Activated B cell treated with CpG ODN at 0.5 μM for 24 hours (primary cell): ENCODE measurements at regions of chr19 and their contacts with region 1.

Region 1: DNA sequence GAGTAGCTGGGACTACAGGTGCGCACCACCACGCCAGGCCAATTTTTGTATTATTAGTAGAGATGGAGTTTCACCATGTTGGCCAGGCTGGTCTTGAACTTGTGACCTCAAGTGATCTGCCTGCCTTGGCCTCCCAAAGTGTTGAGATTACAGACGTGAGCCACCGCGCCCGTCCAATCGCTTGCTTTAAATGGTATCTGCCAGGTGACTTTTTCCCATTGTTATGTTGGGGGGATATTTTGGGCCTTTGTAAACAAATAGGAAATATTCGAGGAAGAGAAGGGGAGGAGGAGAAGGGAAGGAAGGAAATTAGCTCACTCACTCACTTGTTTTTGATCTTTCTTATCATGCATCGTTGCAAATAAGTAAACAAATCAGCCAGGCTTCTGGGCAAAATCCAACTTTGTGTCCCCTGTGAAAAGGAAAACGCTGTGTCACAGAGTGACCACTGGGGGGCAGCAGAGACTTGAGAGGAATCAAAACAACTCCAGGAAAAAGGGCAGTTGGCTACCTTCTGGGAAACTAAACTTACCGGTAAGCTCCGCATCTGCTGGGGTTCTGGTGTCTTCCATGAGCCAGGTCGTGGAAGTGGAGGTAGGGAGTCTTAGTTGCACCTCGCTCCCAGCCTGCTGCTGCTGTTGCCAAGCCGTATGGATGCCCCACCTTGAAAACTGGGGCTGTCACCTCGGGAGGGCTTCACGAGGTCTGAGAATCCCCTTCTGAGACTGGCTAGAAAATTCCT is 9.3 kb upstream of the RANBP3 start:
- DNase-seq: peak; percentile 48
- ATAC-seq: peak; percentile 61
- H3K4me3 Mint-ChIP-seq: peak overlapping the region; percentile 78
- H3K27ac Mint-ChIP-seq: no peak overlapping the region
- H3K4me1 Mint-ChIP-seq: peaks cover 23% of the 10 kb centered on the region
- H3K27me3 Mint-ChIP-seq: no peaks in the 10 kb centered on the region
- CTCF ChIP-seq: no peak

Region 2: DNA sequence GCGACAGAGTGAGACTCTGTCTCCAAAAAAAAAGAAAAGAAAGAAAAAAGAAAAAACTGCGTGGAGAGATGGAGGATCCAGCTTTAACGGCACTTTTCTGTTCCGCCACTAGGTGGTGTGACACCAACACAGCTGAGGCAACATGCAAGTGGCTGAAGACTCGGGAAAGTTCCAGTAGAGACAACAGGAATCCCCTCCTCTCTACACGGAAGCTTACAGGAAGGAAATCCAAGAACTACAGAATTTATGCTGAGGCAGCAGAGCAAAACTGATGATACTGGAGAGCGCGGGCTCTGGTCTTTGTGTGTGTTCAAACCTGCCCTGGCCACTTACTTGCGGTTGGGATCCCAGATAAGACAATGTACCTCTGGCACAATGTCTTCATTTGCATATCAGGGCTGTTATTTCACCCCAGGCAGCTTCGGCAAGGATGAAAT is 19.2 kb before region 1 on chr19:
- CTCF ChIA-PET with region 1: interaction called, 24 read pairs
- POLR2A ChIA-PET with region 1: no interaction called
- intact Hi-C with region 1: loop called (anchors 1 kb)
- DNase-seq: no peak
- ATAC-seq: peak; percentile 72
- H3K4me3 Mint-ChIP-seq: peak overlapping the region; percentile 50
- H3K27ac Mint-ChIP-seq: peak overlapping the region; percentile 73
- H3K4me1 Mint-ChIP-seq: peaks cover 78% of the 10 kb centered on the region
- H3K27me3 Mint-ChIP-seq: no peaks in the 10 kb centered on the region
- CTCF ChIP-seq: peak; percentile 28

Region 3: DNA sequence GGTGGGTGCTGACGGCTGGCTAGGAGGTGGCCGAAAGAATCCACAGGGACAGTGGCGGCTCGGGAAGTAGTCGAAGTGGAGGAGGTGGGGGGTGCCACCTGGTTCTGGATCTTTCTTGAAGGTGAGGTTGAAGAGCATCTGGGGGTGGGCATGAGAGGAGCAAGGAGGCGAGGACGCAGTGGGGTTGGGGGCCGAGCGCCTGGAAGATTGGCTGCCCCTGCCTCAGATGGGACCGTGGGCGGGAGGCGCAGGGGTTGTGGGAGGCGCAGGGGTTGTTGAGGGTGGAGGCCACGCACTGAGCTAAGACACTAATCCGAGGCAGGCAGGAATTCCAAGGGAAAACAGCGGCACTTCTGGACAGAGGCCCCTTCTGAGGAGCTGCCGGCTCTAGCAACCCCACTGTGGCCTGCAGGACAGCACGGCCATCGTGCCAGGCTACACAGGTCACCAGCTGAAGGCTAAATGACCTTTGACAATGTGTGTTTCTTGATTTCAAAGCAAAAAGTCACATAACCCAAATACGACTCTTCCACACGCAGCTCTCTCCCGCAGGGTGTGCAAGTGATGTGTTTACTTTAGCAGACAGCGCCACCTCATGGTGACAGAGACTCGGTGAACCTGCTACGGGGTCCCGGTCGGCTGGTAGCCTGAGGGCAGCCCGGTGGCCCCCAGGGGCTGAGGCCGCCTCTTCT is 34.8 kb after region 1 on chr19:
- CTCF ChIA-PET with region 1: interaction called, 12 read pairs
- POLR2A ChIA-PET with region 1: interaction called, 3 read pairs
- intact Hi-C with region 1: loop called (anchors 1 kb)
- DNase-seq: peak; percentile 50
- ATAC-seq: peak; percentile 97
- H3K4me3 Mint-ChIP-seq: no peak overlapping the region
- H3K27ac Mint-ChIP-seq: no peak overlapping the region
- H3K4me1 Mint-ChIP-seq: no peaks in the 10 kb centered on the region
- H3K27me3 Mint-ChIP-seq: peaks cover 3% of the 10 kb centered on the region
- CTCF ChIP-seq: peak; percentile 25

Region 4: DNA sequence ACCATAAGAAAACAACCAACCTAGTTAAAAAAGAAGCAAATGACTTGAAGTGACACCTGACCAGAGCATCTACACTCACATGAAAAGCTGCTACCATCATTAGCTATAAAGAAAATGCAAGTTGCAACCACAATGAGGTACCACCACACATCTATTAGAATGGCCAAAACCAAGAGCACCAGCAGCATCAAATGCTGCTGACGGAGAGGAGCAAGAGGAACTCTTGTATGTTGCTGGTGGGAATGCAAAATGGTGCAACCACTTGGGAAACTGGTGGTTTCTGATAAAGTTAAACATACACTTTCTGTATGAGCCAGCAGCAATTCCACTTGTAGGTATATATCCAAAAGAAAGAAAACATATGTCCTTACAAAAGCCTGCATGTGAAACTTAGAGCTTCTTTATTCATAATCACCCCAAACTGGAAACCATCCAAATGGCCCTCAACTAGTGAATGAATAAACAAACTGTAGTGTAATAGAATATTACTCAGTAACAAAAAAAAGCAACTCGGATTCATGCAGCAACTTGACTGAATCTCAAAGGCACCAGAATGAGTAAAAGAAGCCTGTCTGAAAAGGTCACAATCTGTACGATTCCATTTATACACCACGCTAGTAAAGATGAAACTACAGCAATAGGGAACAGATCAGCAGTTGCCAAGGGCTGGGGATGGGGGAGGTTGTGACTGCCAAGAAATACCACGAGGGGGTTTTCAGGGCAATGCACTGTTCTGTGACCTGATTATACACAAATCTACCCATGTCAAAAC is 51.6 kb after region 1 on chr19:
- CTCF ChIA-PET with region 1: interaction called, 7 read pairs
- POLR2A ChIA-PET with region 1: interaction called, 4 read pairs
- intact Hi-C with region 1: loop called (anchors 5 kb)
- DNase-seq: no peak
- ATAC-seq: peak; percentile 86
- H3K4me3 Mint-ChIP-seq: peak overlapping the region; percentile 55
- H3K27ac Mint-ChIP-seq: peak overlapping the region; percentile 73
- H3K4me1 Mint-ChIP-seq: peaks cover 26% of the 10 kb centered on the region
- H3K27me3 Mint-ChIP-seq: no peaks in the 10 kb centered on the region
- CTCF ChIP-seq: no peak

Region 5: GRCh38 chr19:6103217-6103644 is 116.0 kb after region 1 on chr19:
- CTCF ChIA-PET with region 1: no interaction called
- POLR2A ChIA-PET with region 1: no interaction called
- intact Hi-C with region 1: no loop called
- DNase-seq: no peak
- ATAC-seq: no peak
- H3K4me3 Mint-ChIP-seq: no peak overlapping the region
- H3K27ac Mint-ChIP-seq: no peak overlapping the region
- H3K4me1 Mint-ChIP-seq: peaks cover 19% of the 10 kb centered on the region
- H3K27me3 Mint-ChIP-seq: peaks cover 2% of the 10 kb centered on the region
- CTCF ChIP-seq: no peak

Region 6: DNA sequence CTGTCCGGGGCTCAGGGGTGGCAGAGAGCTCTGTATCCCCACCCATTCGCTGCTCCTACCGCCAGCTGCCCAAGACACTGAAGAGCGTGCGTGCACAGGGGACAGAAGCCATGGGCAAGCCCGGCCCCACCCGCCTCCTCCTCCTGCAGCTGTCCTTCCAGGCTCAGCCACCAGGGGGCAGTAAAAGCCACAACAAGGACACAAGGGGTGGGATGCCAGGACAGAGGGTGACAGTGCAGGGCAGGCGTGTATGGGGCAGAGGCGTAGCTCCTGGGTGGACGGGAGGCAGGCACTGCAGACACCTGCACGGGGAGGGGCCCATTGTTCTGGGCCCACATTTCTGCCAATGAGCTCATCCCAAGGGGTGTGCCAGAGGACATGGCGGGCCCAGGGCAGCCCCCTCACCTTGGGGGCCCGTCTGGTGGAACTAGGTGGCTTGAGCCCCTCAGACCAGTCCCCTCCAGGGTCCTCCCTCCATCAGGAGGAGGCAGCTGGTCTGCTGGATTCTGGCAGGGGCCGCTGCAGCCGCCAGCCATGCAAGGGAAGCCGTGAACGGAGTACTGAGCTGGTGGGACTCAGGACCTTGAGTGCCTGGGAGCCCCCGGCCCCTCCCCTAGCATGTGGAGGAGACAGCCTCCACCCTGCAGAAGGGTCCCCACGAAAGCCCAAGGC is 231.4 kb after region 1 on chr19:
- CTCF ChIA-PET with region 1: no interaction called
- POLR2A ChIA-PET with region 1: no interaction called
- intact Hi-C with region 1: no loop called
- DNase-seq: peak; percentile 79
- ATAC-seq: peak; percentile 90
- H3K4me3 Mint-ChIP-seq: no peak overlapping the region
- H3K27ac Mint-ChIP-seq: no peak overlapping the region
- H3K4me1 Mint-ChIP-seq: no peaks in the 10 kb centered on the region
- H3K27me3 Mint-ChIP-seq: no peaks in the 10 kb centered on the region
- CTCF ChIP-seq: no peak